Activated CD4-positive, alpha-beta T cell treated with anti-CD3 and anti-CD28 coated beads, Interleukin-2, amount 10 ng/mL, durations not matched to agents 7 days and 5 days (primary cell): ENCODE measurements at regions of chr15 and their contacts with region 1.

Region 1: GRCh38 chr15:66386204-66387123 is at the start of gene MAP2K1:
- DNase-seq: peak; percentile 99
- H3K4me3 Mint-ChIP-seq: peak within 1 kb of the TSS; percentile 95
- H3K27ac Mint-ChIP-seq: peak within 1 kb of the TSS; percentile 99
- H3K4me1 Mint-ChIP-seq: peaks cover 45% of the 10 kb centered on the region
- H3K27me3 Mint-ChIP-seq: no peaks in the 10 kb centered on the region
- total RNA-seq, gene MAP2K1: 72.1 to 83.0 TPM

Region 2: DNA sequence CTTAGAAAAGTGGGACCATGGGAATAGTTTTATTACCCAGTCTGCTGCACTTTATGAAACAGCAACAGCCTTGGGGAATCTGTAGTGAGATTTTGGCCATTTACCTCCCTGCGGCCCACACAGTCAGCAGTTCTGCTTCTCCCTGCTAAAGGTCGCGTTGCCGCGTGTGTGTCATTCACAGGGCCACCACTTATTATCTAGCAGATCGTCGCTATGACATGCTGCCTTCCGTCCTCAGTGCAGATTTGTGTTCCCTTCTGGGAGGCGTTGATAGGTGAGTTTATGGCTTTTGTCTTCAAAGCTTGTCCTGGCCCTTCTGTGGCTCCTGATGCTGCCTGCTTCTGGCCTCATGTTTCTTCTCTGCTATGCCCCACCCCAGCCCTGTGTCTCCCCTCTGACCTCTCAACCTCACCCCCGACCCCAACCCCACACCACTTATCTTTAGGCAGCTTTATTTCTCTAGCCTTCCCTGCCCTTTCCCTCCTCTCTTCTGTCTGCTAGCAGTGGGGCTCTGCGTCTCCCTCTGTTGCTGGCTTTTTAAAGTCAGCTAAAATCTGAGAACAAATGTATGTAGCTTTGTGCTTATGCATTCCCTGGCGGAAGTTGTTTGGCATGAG is 63.0 kb before region 1 on chr15:
- CTCF ChIA-PET with region 1: no interaction called
- POLR2A ChIA-PET with region 1: no interaction called
- DNase-seq: no peak
- H3K4me3 Mint-ChIP-seq: no peak overlapping the region
- H3K27ac Mint-ChIP-seq: no peak overlapping the region
- H3K4me1 Mint-ChIP-seq: no peaks in the 10 kb centered on the region
- H3K27me3 Mint-ChIP-seq: no peaks in the 10 kb centered on the region

Region 3: GRCh38 chr15:66356345-66357236 is 29.9 kb before region 1 on chr15 and contains the start of gene TIPIN:
- CTCF ChIA-PET with region 1: interaction called, 21 read pairs
- POLR2A ChIA-PET with region 1: interaction called, 4 read pairs
- DNase-seq: peak; percentile 99
- H3K4me3 Mint-ChIP-seq: peak within 1 kb of the TSS; percentile 95
- H3K27ac Mint-ChIP-seq: peak within 1 kb of the TSS; percentile 98
- H3K4me1 Mint-ChIP-seq: peaks cover 35% of the 10 kb centered on the region
- H3K27me3 Mint-ChIP-seq: no peaks in the 10 kb centered on the region
- total RNA-seq, gene TIPIN: 25.0 to 28.0 TPM

Region 4: GRCh38 chr15:66369773-66370651 is 16.5 kb before region 1 on chr15:
- CTCF ChIA-PET with region 1: interaction called, 11 read pairs
- POLR2A ChIA-PET with region 1: no interaction called
- DNase-seq: peak; percentile 44
- H3K4me3 Mint-ChIP-seq: peak overlapping the region; percentile 51
- H3K27ac Mint-ChIP-seq: peak overlapping the region; percentile 90
- H3K4me1 Mint-ChIP-seq: peaks cover 23% of the 10 kb centered on the region
- H3K27me3 Mint-ChIP-seq: no peaks in the 10 kb centered on the region

Region 5: GRCh38 chr15:66404532-66404931 is 18.1 kb after region 1 on chr15:
- CTCF ChIA-PET with region 1: interaction called, 12 read pairs
- POLR2A ChIA-PET with region 1: no interaction called
- DNase-seq: no peak
- H3K4me3 Mint-ChIP-seq: peak overlapping the region; percentile 15
- H3K27ac Mint-ChIP-seq: peak overlapping the region; percentile 63
- H3K4me1 Mint-ChIP-seq: peaks cover 91% of the 10 kb centered on the region
- H3K27me3 Mint-ChIP-seq: no peaks in the 10 kb centered on the region

Region 6: GRCh38 chr15:66411190-66411589 is 24.7 kb after region 1 on chr15:
- CTCF ChIA-PET with region 1: interaction called, 12 read pairs
- POLR2A ChIA-PET with region 1: no interaction called
- DNase-seq: peak; percentile 24
- H3K4me3 Mint-ChIP-seq: peak overlapping the region; percentile 59
- H3K27ac Mint-ChIP-seq: peak overlapping the region; percentile 70
- H3K4me1 Mint-ChIP-seq: peaks cover 85% of the 10 kb centered on the region
- H3K27me3 Mint-ChIP-seq: no peaks in the 10 kb centered on the region

Region 7: DNA sequence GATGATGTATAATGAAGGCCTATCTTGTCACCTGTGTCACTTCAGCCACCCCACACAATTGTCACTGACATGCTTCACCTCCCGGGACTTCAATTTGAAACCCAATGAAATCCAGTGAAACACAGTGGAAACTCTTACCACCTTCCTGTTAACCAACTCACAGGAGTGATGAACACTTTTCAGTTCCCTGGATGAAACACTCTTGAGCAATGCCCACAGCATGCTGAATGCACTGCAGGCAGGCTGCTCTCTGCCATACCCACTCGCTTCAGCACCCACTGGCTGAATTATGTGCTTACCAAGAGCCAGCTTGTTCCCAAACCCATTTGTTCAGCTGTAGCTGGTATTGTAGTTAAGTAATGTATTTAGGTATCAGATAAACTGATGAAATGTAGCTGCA is 47.3 kb after region 1 on chr15:
- CTCF ChIA-PET with region 1: no interaction called
- POLR2A ChIA-PET with region 1: no interaction called
- DNase-seq: no peak
- H3K4me3 Mint-ChIP-seq: no peak overlapping the region
- H3K27ac Mint-ChIP-seq: peak overlapping the region; percentile 19
- H3K4me1 Mint-ChIP-seq: peaks cover 41% of the 10 kb centered on the region
- H3K27me3 Mint-ChIP-seq: no peaks in the 10 kb centered on the region

Region 8: DNA sequence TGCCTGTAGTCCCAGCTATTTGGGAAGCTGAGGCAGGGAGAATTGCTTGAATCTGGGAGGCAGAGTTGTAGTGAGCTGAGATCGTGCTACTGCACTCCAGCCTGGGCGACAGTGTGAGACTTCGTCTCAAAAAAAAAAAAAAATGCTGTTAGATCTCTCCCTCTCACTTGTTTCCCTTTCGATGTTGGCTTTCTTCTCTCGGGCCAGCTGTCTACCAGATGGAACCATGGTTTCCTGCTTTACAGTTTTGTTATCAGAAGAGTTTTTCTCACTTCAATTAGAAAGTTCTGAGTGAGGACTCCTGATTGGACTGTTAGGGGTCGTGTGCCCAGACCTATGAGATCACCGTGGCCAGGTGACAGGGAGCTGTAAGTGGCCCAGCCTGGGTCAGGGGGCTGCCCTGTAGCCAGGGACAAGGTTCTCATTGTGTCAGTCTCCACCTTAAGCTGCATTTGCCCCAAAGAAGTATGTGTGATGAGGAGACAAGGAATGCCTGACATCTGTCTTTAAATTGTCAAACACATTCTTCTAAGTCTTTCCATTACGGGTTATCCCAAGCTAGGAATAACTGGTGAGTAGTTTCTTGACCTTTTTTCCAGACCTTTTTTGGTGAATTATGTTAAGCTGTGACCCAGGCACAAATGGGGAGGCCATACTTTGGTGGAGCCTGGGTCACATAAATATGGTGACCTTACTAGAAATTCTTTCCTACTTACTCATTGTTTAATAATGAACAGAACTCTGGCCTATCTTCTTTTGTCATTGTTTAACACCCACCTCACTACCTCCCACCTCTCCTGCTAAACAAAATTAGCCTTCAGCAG is 85.9 kb after region 1 on chr15:
- CTCF ChIA-PET with region 1: interaction called, 3 read pairs
- POLR2A ChIA-PET with region 1: interaction called, 10 read pairs
- DNase-seq: peak; percentile 75
- H3K4me3 Mint-ChIP-seq: peak overlapping the region; percentile 64
- H3K27ac Mint-ChIP-seq: peak overlapping the region; percentile 95
- H3K4me1 Mint-ChIP-seq: peaks cover 40% of the 10 kb centered on the region
- H3K27me3 Mint-ChIP-seq: no peaks in the 10 kb centered on the region

Region 9: GRCh38 chr15:66497502-66498455 is 111.3 kb after region 1 on chr15 and contains the start of gene SNAPC5:
- CTCF ChIA-PET with region 1: interaction called, 35 read pairs
- POLR2A ChIA-PET with region 1: interaction called, 8 read pairs
- DNase-seq: peak; percentile 98
- H3K4me3 Mint-ChIP-seq: peak within 1 kb of the TSS; percentile 97
- H3K27ac Mint-ChIP-seq: peak within 1 kb of the TSS; percentile 96
- H3K4me1 Mint-ChIP-seq: peaks cover 72% of the 10 kb centered on the region
- H3K27me3 Mint-ChIP-seq: no peaks in the 10 kb centered on the region
- total RNA-seq, gene SNAPC5: 21.4 to 24.5 TPM